HCT116 (cell line): ENCODE measurements at regions of chr22 and their contacts with region 1.

Region 1: DNA sequence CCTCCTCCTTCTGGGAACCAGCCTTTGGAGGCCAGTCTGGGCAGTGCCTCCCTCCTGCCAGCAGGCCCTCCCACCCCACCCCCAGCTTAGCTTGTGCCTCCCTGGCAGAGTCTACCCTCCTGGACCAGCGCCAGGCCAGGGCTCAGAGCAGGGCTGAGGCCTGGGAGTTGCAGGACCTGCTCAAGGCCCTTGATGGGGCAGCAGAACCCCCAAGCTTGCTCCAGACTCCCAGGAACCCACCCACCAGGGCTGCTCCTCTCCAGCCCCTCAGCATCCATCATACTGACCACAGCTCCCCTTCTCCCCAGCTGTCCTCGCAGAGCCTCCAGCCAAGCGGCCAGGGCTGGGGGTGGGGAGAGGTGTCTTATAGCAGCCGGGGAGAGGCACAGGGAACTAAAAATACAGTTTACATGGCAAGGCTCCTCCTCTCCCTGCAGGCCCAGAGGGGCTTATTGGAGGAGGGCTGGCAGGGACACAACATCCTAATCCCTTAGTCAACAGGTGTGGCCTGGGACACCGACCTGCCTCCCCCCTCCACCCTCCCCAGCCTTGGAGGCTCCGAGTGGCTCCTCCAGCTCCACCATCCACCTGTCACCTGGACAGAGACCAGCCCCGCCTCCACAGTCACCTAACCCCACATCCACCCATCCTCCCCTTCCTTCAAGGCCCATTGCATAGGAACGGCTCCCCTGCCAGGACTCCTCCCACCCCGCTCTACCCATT is 5.2 kb upstream of the MB start:
- DNase-seq: no peak
- ATAC-seq: no peak
- H3K4me3 ChIP-seq: no peak overlapping the region
- H3K27ac ChIP-seq: peak overlapping the region; percentile 3; the same call in 1 of the 2 replicates
- H3K4me1 ChIP-seq: peaks cover 5 to 26% of the 10 kb centered on the region in 2 experiments
- H3K27me3 ChIP-seq: no peaks in the 10 kb centered on the region
- CTCF ChIP-seq: no peak
- POLR2A ChIP-seq: no peak
- RAD21 ChIP-seq: no peak

Region 2: GRCh38 chr22:35313311-35314121 is 308.8 kb before region 1 on chr22:
- CTCF ChIA-PET with region 1: no interaction called
- POLR2A ChIA-PET with region 1: no interaction called
- RAD21 ChIA-PET with region 1: no interaction called
- intact Hi-C with region 1: no loop called
- DNase-seq: no peak
- ATAC-seq: no peak
- H3K4me3 ChIP-seq: no peak overlapping the region
- H3K27ac ChIP-seq: no peak overlapping the region
- H3K4me1 ChIP-seq: peaks cover 27 to 45% of the 10 kb centered on the region in 2 experiments
- H3K27me3 ChIP-seq: no peaks in the 10 kb centered on the region
- CTCF ChIP-seq: no peak
- POLR2A ChIP-seq: no peak
- RAD21 ChIP-seq: no peak

Region 3: DNA sequence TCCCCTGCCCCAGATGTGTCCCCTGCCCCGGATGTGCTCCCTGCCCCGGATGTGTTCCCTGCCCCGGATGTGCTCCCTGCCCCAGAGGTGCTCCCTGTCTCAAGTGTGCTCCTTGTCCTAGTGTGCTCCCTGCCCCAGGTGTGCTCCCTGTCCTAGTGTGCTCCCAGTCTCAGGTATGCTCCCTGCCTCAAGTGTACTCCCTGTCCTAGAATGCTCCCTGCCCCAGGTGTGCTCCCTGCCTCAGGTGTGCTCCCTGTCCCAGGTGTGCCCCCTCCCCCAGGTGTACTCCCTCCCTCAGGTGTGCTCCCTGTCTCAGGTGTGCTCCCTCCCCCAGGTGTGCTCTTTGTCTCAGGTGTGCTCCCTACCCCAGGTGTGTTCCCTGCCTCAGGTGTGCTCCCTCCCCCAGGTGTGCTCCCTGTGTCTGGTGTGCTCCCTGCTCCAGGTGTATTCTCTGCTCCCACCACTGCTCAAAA is 130.4 kb before region 1 on chr22:
- CTCF ChIA-PET with region 1: no interaction called
- POLR2A ChIA-PET with region 1: no interaction called
- RAD21 ChIA-PET with region 1: interaction called in 1 of 2 experiments, 3 read pairs
- intact Hi-C with region 1: loop called (anchors 2 kb)
- DNase-seq: peak; percentile 79
- ATAC-seq: peak; percentile 72
- H3K4me3 ChIP-seq: peak overlapping the region; percentile 82 to 83
- H3K27ac ChIP-seq: peak overlapping the region; percentile 97
- H3K4me1 ChIP-seq: peaks cover 6 to 16% of the 10 kb centered on the region in 2 experiments; a peak in 3 of 4 replicates
- H3K27me3 ChIP-seq: no peaks in the 10 kb centered on the region
- CTCF ChIP-seq: no peak
- POLR2A ChIP-seq: no peak
- RAD21 ChIP-seq: peak; percentile 24; the same call in 1 of the 2 replicates

Region 4: GRCh38 chr22:35589071-35589952 is 33.0 kb before region 1 on chr22:
- CTCF ChIA-PET with region 1: no interaction called
- POLR2A ChIA-PET with region 1: interaction called, 4 read pairs
- RAD21 ChIA-PET with region 1: no interaction called
- intact Hi-C with region 1: loop called (anchors 2 kb)
- DNase-seq: peak; percentile 57
- ATAC-seq: peak; percentile 83
- H3K4me3 ChIP-seq: peak overlapping the region; percentile 4 to 18; a peak in 1 of 4 replicates
- H3K27ac ChIP-seq: peak overlapping the region; percentile 54
- H3K4me1 ChIP-seq: peaks cover 33 to 49% of the 10 kb centered on the region in 2 experiments
- H3K27me3 ChIP-seq: no peaks in the 10 kb centered on the region
- CTCF ChIP-seq: no peak
- POLR2A ChIP-seq: no peak
- RAD21 ChIP-seq: peak; percentile 37; the same call in 1 of the 2 replicates